Posterior cingulate gyrus (tissue), 11 donors: ENCODE measurements at regions of chr20 and their contacts with region 1.

Region 1: DNA sequence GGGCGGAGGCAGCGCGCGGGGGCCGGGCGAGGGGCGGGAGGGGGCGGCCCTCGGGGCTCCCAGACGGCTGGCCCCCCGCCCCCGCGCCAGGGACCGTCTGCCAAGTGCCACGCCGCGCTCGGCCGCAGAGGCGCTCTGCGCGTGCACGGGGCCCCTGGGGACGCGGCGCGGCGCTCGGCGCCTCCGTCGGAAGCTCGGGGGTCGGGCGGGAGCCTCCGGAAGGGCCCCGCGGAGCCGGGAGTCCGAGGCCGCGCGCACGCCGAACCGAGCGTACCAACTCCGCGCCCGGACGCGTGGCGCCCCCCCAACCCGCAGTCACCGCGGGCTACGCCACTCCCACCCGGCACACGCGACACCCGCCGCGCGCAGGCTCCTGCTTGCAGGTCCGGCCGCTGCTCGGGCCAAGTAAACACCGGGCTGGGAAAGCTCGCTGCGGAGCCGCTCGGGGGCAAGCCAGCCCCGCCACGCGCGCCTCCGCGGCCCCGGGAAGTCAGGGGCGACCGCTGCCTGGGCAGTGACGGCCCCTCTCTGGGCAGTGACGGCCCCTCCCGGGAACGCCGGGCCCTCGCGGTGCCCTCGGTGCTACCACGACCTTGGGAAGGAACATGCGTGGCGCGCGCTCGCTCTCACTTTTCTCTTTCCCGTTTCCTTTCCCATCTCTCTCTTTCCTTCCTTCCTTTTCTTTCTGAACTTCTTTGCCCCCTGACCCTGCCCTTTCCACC is 384 bp upstream of the PREX1 start:
- DNase-seq: peak; percentile 65 to 97 (median 77)

Region 2: DNA sequence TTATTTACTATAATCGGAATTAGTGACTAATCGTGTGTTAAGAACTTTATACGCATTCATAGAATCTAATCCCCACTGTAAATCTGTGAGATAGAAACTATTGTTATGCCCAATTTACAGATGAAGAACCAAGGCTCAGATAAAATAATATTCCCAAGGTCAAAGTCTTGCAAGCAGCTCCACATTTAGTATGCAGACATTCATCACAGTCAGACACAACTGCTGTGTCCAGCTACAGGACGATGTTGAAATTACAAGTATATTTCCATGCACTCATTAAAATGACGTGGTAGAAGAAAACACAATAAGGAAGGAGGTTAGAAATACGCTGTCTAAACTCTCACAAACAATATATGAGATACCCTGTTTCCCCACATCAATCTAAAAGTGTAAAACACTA is 82.9 kb before region 1 on chr20:
- intact Hi-C with region 1: loop called (anchors 5 kb)
- DNase-seq: no peak

Region 3: DNA sequence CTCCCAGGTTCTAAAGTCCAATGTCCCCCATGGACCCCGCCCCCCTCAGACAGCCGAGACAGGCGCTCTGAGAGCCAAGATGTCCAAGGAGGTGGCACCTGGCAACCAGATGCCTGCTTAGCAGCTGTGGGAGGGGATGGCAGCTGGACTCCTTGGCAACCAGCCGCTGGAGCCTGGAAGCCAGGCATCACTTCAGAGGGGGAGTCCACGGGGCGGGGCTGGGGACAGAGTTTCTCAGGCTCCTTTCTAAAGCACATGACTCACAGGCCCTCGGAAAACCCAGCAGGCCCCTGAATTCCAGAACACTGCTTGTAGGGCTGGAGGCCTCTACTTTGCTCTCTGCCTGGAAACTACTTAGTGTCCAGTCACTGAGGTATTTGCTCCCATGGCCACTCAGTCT is 51.9 kb before region 1 on chr20:
- intact Hi-C with region 1: loop called (anchors 10 kb)
- DNase-seq: peak in 4 of 10 donors; percentile 47 to 91 (median 74)

Region 4: GRCh38 chr20:48904365-48905296 is 76.4 kb after region 1 on chr20:
- intact Hi-C with region 1: loop called (anchors 2 kb)
- DNase-seq: peak in 8 of 10 donors; percentile 29 to 91 (median 70)

Region 5: GRCh38 chr20:49148601-49149000 is 320.4 kb after region 1 on chr20:
- intact Hi-C with region 1: no loop called
- DNase-seq: no peak

Region 6: DNA sequence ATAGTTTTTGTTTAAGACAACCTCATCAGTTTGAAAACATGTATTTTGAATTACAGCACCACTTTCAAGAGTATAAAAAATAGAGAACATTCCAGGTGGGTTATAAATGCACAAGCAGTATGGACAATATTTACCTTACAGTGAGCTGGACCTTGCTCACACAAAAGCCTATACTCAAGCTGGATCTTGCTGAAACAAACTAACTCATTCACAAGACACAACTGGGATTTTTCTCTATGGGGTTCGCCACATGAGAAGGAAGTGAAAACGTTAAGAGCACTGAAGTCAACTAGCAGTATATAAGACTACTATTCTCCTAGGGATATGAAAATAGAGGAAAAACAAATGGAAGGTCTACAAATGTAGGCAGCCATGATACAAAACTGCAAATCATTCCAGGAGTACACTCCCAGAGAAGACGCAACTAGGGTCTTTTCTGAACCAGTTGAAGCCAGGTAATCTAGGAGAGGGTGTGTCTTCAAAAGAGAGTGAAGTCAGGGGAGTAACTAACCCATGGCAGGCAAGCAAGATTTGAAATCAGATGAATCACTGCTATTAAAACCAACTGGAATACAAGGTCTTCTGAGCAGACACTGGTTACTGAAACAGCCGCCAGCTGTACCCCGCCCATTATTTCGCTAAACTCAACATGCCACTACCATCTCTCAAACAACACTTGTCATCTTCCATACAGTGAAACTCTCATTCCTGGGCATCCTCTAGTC is 333.4 kb after region 1 on chr20:
- intact Hi-C with region 1: no loop called
- DNase-seq: no peak